ENCODE measurements at regions of chr7 and their contacts with region 1.

Region 1: GRCh38 chr7:86932038-86932512 is 127.4 kb downstream of the ELAPOR2 start:
- DNase-seq: peak; percentile 74
- ATAC-seq: peak; percentile 93
- H3K4me3 ChIP-seq: no peak overlapping the region
- H3K27ac ChIP-seq: peak overlapping the region; percentile 68
- H3K4me1 ChIP-seq: peaks cover 19% of the 10 kb centered on the region
- H3K27me3 ChIP-seq: no peaks in the 10 kb centered on the region
- CTCF ChIP-seq: no peak

Region 2: DNA sequence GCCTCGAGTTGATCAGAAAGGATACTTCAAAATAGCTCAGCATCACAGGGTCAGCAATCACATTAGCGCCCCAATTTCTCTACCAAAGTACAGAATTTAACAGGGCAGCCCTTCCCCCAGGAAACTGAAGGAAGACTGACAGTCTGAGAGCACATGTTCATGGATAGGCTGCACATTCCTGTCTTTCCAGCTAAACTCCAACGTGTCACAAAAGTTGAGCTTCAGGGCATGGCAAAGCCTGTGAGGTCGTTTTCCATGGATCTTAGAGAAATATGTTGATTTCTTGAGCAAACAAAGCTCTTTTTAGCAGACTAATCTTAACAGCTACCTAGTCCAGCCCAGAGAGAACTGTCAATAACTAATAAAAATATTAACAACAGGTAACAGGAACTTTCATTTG is 80.5 kb before region 1 on chr7:
- CTCF ChIA-PET with region 1: no interaction called
- POLR2A ChIA-PET with region 1: no interaction called
- intact Hi-C with region 1: no loop called
- DNase-seq: no peak
- ATAC-seq: no peak
- H3K4me3 ChIP-seq: no peak overlapping the region
- H3K27ac ChIP-seq: no peak overlapping the region
- H3K4me1 ChIP-seq: peaks cover 11% of the 10 kb centered on the region
- H3K27me3 ChIP-seq: no peaks in the 10 kb centered on the region
- CTCF ChIP-seq: no peak

Region 3: GRCh38 chr7:87038993-87039716 is 107.1 kb after region 1 on chr7:
- CTCF ChIA-PET with region 1: no interaction called
- POLR2A ChIA-PET with region 1: no interaction called
- intact Hi-C with region 1: loop called (anchors 2 kb)
- DNase-seq: peak; percentile 30
- ATAC-seq: peak; percentile 80
- H3K4me3 ChIP-seq: peak overlapping the region; percentile 83
- H3K27ac ChIP-seq: peak overlapping the region; percentile 28
- H3K4me1 ChIP-seq: peaks cover 7% of the 10 kb centered on the region; the same call in 1 of the 2 replicates
- H3K27me3 ChIP-seq: no peaks in the 10 kb centered on the region
- CTCF ChIP-seq: no peak

Region 4: DNA sequence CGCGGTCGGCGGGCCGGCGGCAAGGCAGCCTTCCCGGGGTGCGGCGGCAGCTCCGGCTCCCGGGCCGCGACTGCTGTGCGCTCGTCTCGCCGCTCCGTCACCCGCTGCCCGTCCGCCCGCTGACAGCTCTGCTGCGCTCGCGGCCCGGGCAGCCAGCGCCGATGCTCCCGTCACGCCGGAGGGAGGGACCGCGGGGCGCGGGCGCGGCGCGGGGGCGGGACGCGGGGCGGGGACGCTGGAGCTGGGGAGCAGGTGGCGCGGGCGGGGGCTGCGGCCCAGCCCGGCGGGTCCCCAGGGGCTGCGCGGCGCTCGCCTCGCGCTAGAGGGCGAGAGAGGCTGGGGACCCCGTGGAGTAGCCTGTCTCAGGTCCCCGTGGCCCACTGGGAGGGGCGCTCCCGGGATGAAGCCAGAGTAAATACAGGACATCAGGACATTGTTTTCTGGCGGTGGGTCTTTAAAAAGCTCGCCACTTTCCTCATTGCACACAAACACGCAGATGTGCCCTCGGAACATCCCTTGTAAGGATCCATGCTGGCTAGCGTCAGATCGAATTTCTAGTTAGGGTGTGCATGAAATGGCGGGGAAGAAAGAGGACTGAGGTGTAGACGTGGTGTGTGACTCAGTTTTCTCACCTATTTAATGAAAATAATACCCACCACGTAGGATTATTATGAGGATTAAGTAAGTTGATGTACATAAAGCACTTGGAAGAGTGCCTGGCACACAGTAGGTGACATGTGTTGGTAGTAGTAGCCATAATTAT is 127.6 kb after region 1 on chr7 and contains the start of gene ELAPOR2:
- CTCF ChIA-PET with region 1: interaction called, 16 read pairs
- POLR2A ChIA-PET with region 1: no interaction called
- intact Hi-C with region 1: loop called (anchors 2 kb)
- DNase-seq: peak; percentile 80
- ATAC-seq: peak; percentile 88
- H3K4me3 ChIP-seq: peak within 1 kb of the TSS; percentile 94
- H3K27ac ChIP-seq: peak within 1 kb of the TSS; percentile 22; the same call in 1 of the 2 replicates
- H3K4me1 ChIP-seq: peaks cover 10% of the 10 kb centered on the region; the same call in 1 of the 2 replicates
- H3K27me3 ChIP-seq: no peaks in the 10 kb centered on the region
- CTCF ChIP-seq: peak; percentile 44
- total RNA-seq, gene ELAPOR2: 10.2 and 14.7 TPM in 2 replicates

Region 5: DNA sequence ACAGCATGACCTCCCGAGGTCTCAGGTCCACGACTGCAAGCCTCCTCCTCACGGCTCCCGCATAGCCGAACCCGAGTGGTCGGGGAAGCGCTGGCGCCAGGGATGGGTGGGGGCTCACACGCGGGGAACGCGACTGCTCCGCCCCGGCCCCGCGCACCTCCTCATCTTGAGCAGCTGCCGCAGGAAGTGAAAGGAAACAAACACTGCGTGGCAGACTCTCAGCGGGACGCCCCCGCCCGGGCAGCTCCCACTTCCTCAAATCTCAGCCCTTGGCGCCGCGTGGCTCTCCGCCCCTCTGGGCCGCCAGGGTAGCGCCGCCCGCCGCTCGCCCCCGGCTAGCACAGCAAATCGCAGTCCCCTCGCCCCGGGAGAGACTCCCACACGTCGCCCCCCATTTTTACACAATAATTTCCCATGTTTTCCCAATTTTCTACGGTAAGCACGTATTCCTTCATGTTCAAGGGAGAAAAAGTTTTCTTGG is 287.5 kb after region 1 on chr7 and contains the start of gene TMEM243:
- CTCF ChIA-PET with region 1: no interaction called
- POLR2A ChIA-PET with region 1: no interaction called
- intact Hi-C with region 1: loop called (anchors 5 kb)
- DNase-seq: peak; percentile 54
- ATAC-seq: peak; percentile 60
- H3K4me3 ChIP-seq: peak within 1 kb of the TSS; percentile 94
- H3K27ac ChIP-seq: peak within 1 kb of the TSS; percentile 14; the same call in 1 of the 2 replicates
- H3K4me1 ChIP-seq: peaks cover 8% of the 10 kb centered on the region; the same call in 1 of the 2 replicates
- H3K27me3 ChIP-seq: no peaks in the 10 kb centered on the region
- CTCF ChIP-seq: peak; percentile 9; the same call in 1 of the 2 replicates
- total RNA-seq, gene TMEM243: 16.6 and 18.8 TPM in 2 replicates